Endothelial cell of umbilical vein (primary cell): ENCODE measurements at regions of chr16 and their contacts with region 1.

Region 1: GRCh38 chr16:1918312-1918889 is at the start of gene HS3ST6:
- DNase-seq: no peak
- H3K4me3 ChIP-seq: no peak within 1 kb of the TSS
- H3K27ac ChIP-seq: no peak within 1 kb of the TSS
- H3K4me1 ChIP-seq: no peaks in the 10 kb centered on the region
- H3K27me3 ChIP-seq: peaks cover 44 to 45% of the 10 kb centered on the region in 2 experiments
- CTCF ChIP-seq: no peak
- POLR2A ChIP-seq: no peak
- total RNA-seq, gene HS3ST6: not detected in 2 replicates

Region 2: DNA sequence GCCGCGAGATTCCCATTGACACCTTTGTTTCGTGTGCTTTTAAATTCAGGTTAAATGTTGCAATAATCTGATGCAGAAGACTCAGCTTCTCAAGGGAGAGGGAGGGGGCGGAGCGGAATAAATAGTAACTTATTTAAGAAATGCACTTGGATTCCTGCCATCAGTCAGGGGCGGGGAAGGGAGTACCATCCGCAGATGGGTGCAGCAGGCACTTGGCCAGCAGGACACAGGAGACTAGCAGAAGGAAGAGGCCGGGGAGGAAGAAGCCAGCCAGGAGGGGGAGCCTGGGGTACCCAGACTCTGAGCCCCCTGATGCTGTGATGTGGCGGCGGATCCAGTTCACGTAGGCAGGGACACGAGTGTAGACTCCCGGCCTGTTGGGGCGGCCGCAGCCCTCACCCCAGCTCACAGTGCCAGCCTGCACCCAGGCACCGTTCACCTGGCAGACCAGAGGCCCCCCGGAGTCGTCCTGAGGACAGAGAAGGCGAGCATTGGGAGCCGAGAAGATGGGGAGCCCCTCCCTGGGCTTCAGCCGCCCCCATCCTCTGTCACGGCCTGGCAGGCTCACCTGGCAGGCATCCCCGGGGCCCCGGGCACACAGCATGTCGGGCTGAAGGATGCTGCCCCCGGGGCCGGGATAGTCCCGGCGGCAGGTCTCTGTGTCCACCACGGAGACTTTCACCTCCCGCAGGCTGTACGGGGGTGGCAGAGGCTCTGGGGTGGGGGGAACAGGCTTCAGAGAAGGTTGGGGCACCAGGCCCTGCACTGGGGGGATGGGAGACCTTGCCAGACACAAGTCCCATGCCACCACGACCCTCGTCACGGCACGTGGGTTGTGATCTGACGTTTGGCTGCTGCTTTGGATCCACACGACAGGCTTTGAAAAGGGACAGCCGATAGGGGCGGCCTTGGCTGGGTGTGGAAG is 696.5 kb before region 1 on chr16:
- CTCF ChIA-PET with region 1: no interaction called
- POLR2A ChIA-PET with region 1: no interaction called
- dilution Hi-C with region 1: no loop called
- intact Hi-C with region 1: loop called (anchors 5 kb)
- DNase-seq: no peak
- H3K4me3 ChIP-seq: no peak overlapping the region
- H3K27ac ChIP-seq: no peak overlapping the region
- H3K4me1 ChIP-seq: no peaks in the 10 kb centered on the region
- H3K27me3 ChIP-seq: no peaks in the 10 kb centered on the region
- CTCF ChIP-seq: no peak
- POLR2A ChIP-seq: no peak

Region 3: DNA sequence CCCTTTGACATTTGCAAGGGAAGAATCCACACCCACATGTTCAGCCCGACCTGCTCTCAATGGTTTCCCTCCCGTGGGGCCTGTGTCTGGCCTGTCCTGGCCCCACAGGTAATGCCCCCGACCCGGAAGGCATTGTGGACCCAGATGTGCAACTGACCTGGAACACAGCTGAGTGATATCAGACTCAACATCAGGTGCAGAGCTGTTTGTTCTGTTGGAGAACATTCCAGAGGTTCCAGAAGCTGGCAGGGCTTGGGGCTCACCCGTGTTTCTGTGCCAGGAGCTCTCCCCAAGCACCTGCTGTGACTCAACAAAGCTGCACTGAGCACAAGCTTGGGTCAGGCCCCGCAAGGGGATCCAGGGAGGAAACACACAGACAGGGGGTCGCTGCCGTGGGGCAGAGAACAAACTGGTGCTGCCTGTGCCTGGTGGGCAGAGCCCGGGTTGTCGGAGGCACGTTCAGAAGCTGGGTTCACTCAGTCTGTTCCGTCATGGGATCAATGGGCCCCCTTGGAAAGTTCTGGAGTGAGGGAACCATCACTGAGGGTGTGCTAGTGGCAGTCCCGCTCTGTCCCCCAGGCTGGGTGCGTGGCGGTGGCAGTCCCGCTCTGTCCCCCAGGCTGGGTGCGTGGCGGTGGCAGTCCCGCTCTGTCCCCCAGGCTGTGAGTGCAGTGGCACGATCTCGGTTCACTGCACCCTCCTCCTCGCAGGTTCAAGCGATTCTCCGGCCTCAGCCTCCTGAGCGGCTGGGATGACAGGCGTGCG is 22.3 kb before region 1 on chr16:
- CTCF ChIA-PET with region 1: no interaction called
- POLR2A ChIA-PET with region 1: no interaction called
- dilution Hi-C with region 1: no loop called
- intact Hi-C with region 1: no loop called
- DNase-seq: no peak
- H3K4me3 ChIP-seq: no peak overlapping the region
- H3K27ac ChIP-seq: no peak overlapping the region
- H3K4me1 ChIP-seq: no peaks in the 10 kb centered on the region
- H3K27me3 ChIP-seq: peaks cover 2% of the 10 kb centered on the region in 2 experiments
- CTCF ChIP-seq: no peak
- POLR2A ChIP-seq: no peak